ENCODE measurements at regions of chr12 and their contacts with region 1.

Region 1: GRCh38 chr12:53079226-53080117 is at the start of gene SPRYD3:
- DNase-seq: peak; percentile 96
- ATAC-seq: peak; percentile 98
- H3K4me3 ChIP-seq: peak within 1 kb of the TSS; percentile 72 to 89 (median 73)
- H3K27ac ChIP-seq: peak within 1 kb of the TSS; percentile 91
- H3K4me1 ChIP-seq: peaks cover 53% of the 10 kb centered on the region
- H3K27me3 ChIP-seq: no peaks in the 10 kb centered on the region; a peak in 1 of 5 replicates
- CTCF ChIP-seq: no peak
- EP300 ChIP-seq: no peak
- POLR2A ChIP-seq: peak; percentile 83 to 95
- RAD21 ChIP-seq: peak; percentile 15; the same call in 1 of the 2 replicates
- total RNA-seq, gene SPRYD3: 9.0 and 9.2 TPM in 2 replicates

Region 2: GRCh38 chr12:53005986-53006809 is 73.3 kb before region 1 on chr12 and contains the start of gene EIF4B:
- CTCF ChIA-PET with region 1: no interaction called
- POLR2A ChIA-PET with region 1: interaction called, 16 read pairs
- in situ Hi-C with region 1: no loop called
- intact Hi-C with region 1: no loop called
- DNase-seq: peak; percentile 97
- ATAC-seq: peak; percentile 96
- H3K4me3 ChIP-seq: peak within 1 kb of the TSS; percentile 89 to 93 (median 92)
- H3K27ac ChIP-seq: peak within 1 kb of the TSS; percentile 99
- H3K4me1 ChIP-seq: peaks cover 47% of the 10 kb centered on the region
- H3K27me3 ChIP-seq: no peaks in the 10 kb centered on the region; a peak in 1 of 5 replicates
- CTCF ChIP-seq: peak; percentile 22; the same call in 1 of the 2 replicates
- EP300 ChIP-seq: no peak; a peak in 2 of 4 replicates
- POLR2A ChIP-seq: peak; percentile 52 to 70; a peak in 3 of 4 replicates
- RAD21 ChIP-seq: no peak
- total RNA-seq, gene EIF4B: 548 and 779 TPM in 2 replicates

Region 3: GRCh38 chr12:53054112-53054833 is 25.2 kb before region 1 on chr12:
- CTCF ChIA-PET with region 1: no interaction called
- POLR2A ChIA-PET with region 1: interaction called, 60 read pairs
- in situ Hi-C with region 1: no loop called
- intact Hi-C with region 1: no loop called
- DNase-seq: peak; percentile 83
- ATAC-seq: peak; percentile 19
- H3K4me3 ChIP-seq: peak overlapping the region; percentile 52 to 73 (median 60); a peak in 5 of 6 replicates
- H3K27ac ChIP-seq: peak overlapping the region; percentile 69
- H3K4me1 ChIP-seq: peaks cover 40% of the 10 kb centered on the region
- H3K27me3 ChIP-seq: no peaks in the 10 kb centered on the region
- CTCF ChIP-seq: no peak
- EP300 ChIP-seq: no peak
- POLR2A ChIP-seq: peak in 1 of 2 experiments; percentile 44; a peak in 1 of 4 replicates
- RAD21 ChIP-seq: no peak

Region 4: DNA sequence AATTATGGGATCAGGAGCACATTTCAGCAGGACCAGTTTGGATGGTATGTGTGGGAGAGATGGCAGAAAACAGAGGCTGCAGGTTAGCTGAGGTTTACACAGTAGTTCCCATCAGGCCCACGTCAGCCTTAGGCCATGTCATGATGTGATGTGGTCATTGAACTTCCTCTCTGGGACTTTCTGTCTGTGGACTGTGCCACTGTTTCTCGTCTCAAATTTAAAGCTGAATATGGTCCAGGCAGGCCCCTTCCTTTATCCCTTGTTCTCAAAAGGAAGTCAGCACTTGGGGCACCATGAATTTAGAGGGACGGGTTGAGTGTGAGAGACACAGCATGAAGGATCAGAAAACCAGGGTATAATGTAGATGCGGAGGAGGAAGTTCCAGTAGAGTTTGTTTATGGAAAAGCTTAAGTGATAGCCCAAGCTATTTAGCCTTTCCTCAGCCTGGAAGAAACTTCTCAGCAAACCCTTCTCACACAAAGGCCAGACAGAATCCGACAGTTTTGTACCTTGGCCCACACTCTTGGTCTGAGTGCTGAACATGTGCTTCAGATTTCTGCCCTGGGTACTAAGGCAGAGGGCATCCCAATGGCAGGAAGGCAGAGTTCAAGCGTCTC is 14.4 kb after region 1 on chr12:
- CTCF ChIA-PET with region 1: no interaction called
- POLR2A ChIA-PET with region 1: interaction called, 42 read pairs
- in situ Hi-C with region 1: no loop called
- intact Hi-C with region 1: loop called (anchors 2 kb)
- DNase-seq: no peak
- ATAC-seq: no peak
- H3K4me3 ChIP-seq: peak overlapping the region in 1 of 3 experiments; percentile 23; a peak in 1 of 6 replicates
- H3K27ac ChIP-seq: no peak overlapping the region
- H3K4me1 ChIP-seq: peaks cover 50% of the 10 kb centered on the region
- H3K27me3 ChIP-seq: peaks cover 0 to 19% of the 10 kb centered on the region in 2 experiments; a peak in 3 of 5 replicates
- CTCF ChIP-seq: no peak
- EP300 ChIP-seq: no peak
- POLR2A ChIP-seq: no peak
- RAD21 ChIP-seq: no peak

Region 5: DNA sequence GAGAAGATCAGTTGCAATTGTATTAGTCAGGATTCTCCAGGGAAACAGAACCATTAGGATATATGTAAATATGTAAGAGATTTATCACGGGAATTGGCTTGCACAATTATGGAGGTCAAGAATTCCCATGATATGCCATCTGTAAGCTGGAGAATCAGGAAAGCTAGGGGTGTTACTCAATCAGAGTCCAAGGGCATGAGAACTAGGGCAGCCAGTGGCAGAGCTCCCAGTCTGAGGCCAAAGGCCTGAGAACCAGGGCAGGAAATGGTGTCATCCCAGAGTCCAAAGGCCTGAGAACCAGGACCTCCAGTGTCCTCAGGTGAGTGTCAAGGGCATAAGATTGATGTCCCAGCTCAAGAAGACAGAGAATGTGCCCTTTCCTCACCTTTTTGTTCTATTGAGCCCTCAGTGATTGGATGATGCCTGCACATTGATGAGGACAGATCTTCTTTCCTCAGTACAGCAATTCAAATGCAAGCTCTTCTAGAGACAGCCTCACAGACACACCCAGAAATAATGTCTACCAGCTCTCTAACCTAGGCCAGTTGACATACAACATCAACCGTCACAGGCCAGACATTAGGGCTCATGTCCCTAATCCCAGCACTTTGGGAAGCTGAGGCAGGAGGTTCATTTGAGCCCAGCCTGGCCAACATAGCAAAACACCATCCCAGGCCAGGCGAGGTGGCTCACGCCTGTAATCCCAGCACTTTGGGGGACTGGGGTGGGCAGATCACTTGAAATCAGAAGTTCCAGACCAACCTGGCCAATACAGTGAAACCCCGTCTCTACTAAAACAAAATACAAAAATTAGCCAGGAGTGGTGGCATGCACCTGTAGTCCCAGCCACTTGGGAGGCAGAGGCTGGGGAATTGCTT is 66.2 kb after region 1 on chr12:
- CTCF ChIA-PET with region 1: no interaction called
- POLR2A ChIA-PET with region 1: interaction called, 15 read pairs
- in situ Hi-C with region 1: no loop called
- intact Hi-C with region 1: no loop called
- DNase-seq: peak; percentile 84
- ATAC-seq: peak; percentile 98
- H3K4me3 ChIP-seq: no peak overlapping the region
- H3K27ac ChIP-seq: no peak overlapping the region
- H3K4me1 ChIP-seq: peaks cover 23% of the 10 kb centered on the region
- H3K27me3 ChIP-seq: no peaks in the 10 kb centered on the region
- CTCF ChIP-seq: no peak
- EP300 ChIP-seq: peak in 1 of 2 experiments; percentile 34; a peak in 1 of 4 replicates
- POLR2A ChIP-seq: no peak
- RAD21 ChIP-seq: no peak

Region 6: DNA sequence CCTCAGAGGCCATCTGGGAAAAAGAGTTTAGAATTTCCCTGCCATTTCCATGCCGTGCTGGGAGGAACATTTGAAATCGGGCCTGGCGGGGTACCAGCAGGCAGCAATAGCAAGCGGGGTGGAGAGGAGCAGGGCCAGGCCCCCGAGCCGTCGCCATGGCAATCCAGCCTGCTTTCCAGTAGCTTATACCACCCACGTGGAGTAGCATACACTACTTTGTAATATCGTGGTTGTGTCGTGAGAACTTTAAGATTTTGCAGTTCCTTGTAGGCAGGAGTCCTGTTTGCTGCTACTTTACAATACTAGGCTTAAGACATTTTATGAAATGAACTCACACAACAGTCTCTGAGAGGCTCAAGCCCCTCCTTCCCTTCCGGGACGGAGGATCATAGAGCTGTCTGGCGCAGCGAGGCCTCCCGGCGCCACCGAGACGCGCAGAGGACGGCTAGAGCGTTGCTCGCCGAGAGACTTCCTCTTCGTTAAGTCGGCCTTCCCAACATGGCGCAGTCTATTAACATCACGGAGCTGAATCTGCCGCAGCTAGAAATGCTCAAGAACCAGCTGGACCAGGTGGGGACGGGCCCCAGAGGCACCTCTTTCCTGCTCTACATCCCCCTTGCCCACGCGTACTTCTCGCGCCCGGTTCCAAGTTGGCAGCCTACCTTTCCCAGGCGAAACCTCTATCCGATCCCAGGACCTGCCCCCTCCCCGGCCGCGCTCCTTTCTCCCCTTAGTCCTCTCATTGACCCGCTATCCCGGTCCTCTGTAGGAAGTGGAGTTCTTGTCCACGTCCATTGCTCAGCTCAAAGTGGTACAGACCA is 215.8 kb after region 1 on chr12 and contains the start of gene PFDN5:
- CTCF ChIA-PET with region 1: no interaction called
- POLR2A ChIA-PET with region 1: interaction called, 14 read pairs
- in situ Hi-C with region 1: no loop called
- intact Hi-C with region 1: no loop called
- DNase-seq: peak; percentile 84
- ATAC-seq: peak; percentile 90
- H3K4me3 ChIP-seq: peak within 1 kb of the TSS; percentile 90 to 98 (median 96)
- H3K27ac ChIP-seq: peak within 1 kb of the TSS; percentile 74
- H3K4me1 ChIP-seq: peaks cover 40% of the 10 kb centered on the region
- H3K27me3 ChIP-seq: peaks cover 0 to 4% of the 10 kb centered on the region in 2 experiments; a peak in 1 of 5 replicates
- CTCF ChIP-seq: no peak; the same call in 1 of the 2 replicates
- EP300 ChIP-seq: 0 out of 4 replicates have a peak, but pooled peaks of 1 of the 2 experiments have one; percentile 7
- POLR2A ChIP-seq: peak; percentile 84 to 88
- RAD21 ChIP-seq: no peak
- total RNA-seq, gene PFDN5: 462 and 578 TPM in 2 replicates